AG04449 (cell line): ENCODE measurements at regions of chr9 and their contacts with region 1.

Region 1: GRCh38 chr9:91949946-91950664 is at the start of gene ROR2:
- DNase-seq: no peak
- H3K4me3 ChIP-seq: peak within 1 kb of the TSS; percentile 60
- CTCF ChIP-seq: peak; percentile 48

Region 2: DNA sequence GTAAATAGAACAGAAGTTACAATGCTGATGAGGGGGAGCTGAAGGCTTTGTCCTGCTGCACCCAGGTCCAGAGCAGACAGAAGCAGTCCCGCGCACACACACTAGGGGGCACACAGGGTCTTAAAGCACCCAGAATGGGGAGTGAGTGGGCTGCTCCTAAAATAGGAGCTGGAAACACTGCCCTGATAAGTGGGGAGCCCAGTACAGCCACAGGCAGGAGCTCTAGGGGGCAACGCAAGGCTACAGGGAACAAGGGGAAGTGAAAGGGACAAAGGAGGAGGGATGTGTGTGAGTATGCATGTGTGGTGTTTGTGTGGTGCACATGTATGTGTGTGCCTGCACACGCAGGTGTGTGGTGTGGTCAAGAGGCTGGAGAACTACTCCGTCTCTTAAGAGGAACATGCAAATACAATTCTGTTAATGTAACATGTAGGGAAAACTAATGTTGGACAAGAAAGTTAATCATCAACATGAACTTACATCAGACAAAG is 191.6 kb before region 1 on chr9:
- CTCF ChIA-PET with region 1: interaction called, 42 read pairs
- POLR2A ChIA-PET with region 1: no interaction called
- DNase-seq: no peak
- H3K4me3 ChIP-seq: no peak overlapping the region
- CTCF ChIP-seq: peak; percentile 83

Region 3: GRCh38 chr9:91865041-91865440 is 85.1 kb before region 1 on chr9:
- CTCF ChIA-PET with region 1: no interaction called
- POLR2A ChIA-PET with region 1: no interaction called
- DNase-seq: no peak
- H3K4me3 ChIP-seq: no peak overlapping the region
- CTCF ChIP-seq: no peak

Region 4: GRCh38 chr9:91935066-91935749 is 14.9 kb before region 1 on chr9:
- CTCF ChIA-PET with region 1: interaction called, 21 read pairs
- POLR2A ChIA-PET with region 1: no interaction called
- DNase-seq: no peak
- H3K4me3 ChIP-seq: no peak overlapping the region
- CTCF ChIP-seq: no peak

Region 5: DNA sequence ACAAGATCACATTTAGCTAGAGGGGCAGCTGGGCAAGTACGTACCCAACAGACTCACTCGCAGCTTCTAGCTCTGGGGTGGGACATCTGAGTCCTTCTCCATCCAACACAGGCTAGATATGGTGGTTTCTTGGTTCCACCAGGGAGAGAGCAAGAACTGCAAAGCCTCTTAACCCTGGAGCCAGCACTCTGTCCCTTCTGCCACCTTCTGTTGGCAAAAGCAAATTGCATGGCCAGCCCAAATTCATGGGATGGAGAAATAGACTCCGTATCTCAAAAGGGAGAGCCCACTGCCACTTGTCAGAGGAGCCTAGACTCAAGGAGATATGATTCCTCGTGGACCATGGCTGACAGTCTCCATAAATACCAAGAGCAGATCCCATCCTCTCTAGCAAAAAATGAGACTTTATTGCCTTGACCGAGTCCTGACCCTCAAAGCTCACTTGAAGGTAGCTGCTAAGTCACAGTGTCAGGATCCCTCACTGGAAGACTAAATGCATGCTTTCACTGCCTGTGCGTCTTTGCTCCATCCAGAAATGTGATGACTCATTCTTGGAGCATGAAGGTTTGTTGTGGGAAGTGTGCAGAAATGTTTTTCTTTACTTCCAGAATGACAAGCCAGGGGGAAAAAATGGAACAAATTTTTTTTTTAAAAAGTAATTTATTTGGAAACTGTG is 28.8 kb after region 1 on chr9:
- CTCF ChIA-PET with region 1: interaction called, 41 read pairs
- POLR2A ChIA-PET with region 1: no interaction called
- DNase-seq: peak; percentile 87
- H3K4me3 ChIP-seq: no peak overlapping the region
- CTCF ChIP-seq: peak; percentile 43

Region 6: DNA sequence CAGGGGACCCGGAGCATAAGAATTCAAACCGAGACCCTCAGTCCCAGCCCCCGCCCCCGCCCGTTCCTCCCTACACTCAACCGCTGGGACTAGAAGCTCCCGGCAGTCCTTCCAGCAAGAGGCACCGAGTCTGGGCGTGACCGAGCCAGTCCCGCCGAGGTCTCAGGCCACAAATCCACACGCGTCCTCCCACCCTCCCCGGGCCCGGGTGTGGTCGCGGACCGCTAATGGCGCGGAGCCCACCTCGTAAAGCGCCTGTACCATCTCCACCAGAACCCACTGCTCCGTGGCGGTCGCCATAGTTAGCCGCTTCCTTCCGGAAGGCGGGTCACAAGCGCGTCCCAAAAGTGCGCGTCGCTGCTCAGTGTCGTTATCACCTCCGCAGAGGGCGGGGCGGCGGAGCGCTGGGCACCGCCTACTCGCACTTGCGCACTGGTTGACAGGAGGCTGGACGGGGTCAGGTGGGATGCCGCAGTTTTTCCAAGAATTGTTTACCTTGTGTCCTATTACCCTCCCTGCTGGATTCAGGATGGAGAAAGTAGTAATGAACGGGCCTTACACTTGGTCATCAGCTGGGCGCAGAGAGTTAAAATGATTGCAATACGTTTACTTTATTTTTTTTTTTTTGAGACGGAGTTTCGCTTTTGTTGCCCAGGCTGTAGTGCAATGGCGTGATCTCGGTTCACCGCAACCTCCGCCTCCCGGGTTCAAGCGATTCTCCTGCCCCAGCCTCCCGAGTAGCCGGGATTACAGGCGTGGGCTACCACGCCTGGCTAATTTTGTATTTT is 165.2 kb after region 1 on chr9 and contains the start of gene SPTLC1:
- CTCF ChIA-PET with region 1: interaction called, 10 read pairs
- POLR2A ChIA-PET with region 1: interaction called, 3 read pairs
- DNase-seq: peak; percentile 66
- H3K4me3 ChIP-seq: peak within 1 kb of the TSS; percentile 95
- CTCF ChIP-seq: no peak

Region 7: GRCh38 chr9:92180669-92181181 is 230.6 kb after region 1 on chr9:
- CTCF ChIA-PET with region 1: no interaction called
- POLR2A ChIA-PET with region 1: no interaction called
- DNase-seq: peak; percentile 57
- H3K4me3 ChIP-seq: no peak overlapping the region
- CTCF ChIP-seq: no peak